Kidney (tissue), 22 donors: ENCODE measurements at regions of chr5 and their contacts with region 1.

Region 1: DNA sequence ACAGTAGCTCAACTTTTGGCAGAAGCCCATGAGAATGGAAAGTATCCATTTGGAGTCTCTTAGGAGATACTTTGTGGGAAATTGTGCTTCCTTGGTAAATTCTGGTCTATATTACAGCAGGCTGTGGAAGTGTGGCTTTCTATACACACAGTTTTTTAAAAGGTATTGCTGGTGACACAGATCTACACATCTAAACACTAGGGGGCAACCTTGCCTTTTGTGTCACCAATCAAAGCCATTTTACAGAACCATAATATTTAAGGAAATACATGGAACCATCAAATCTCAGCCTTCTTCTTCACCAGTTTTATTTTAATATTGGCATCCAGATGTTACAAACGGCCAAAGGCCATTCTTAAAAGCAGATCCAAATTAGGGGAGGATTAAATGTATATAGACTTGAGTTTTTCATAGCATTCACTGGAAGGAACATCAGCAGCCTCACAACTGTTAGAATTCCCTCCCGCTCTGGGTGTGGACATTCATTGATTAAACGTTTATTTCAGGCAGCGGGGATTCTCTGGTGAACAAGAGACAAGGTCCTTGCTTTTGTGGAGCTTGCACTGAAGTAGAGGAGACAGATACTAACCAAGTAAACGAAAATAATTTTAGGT is 132.4 kb upstream of the EPB41L4A start:
- DNase-seq: peak in 3 of 5 donors; percentile 46 to 85 (median 75)
- H3K4me3 ChIP-seq: no peak overlapping the region
- H3K27ac ChIP-seq: no peak overlapping the region
- H3K4me1 ChIP-seq: peaks cover 0 to 2% (median 0%) of the 10 kb centered on the region in 3 donors
- H3K27me3 ChIP-seq: no peaks in the 10 kb centered on the region
- CTCF ChIP-seq: peak; percentile 68

Region 2: GRCh38 chr5:112407667-112408403 is 143.7 kb before region 1 on chr5:
- intact Hi-C with region 1: no loop called
- DNase-seq: no peak
- H3K4me3 ChIP-seq: no peak overlapping the region
- H3K27ac ChIP-seq: no peak overlapping the region
- H3K4me1 ChIP-seq: peaks cover 0 to 14% (median 13%) of the 10 kb centered on the region in 3 donors
- H3K27me3 ChIP-seq: no peaks in the 10 kb centered on the region
- CTCF ChIP-seq: no peak

Region 3: DNA sequence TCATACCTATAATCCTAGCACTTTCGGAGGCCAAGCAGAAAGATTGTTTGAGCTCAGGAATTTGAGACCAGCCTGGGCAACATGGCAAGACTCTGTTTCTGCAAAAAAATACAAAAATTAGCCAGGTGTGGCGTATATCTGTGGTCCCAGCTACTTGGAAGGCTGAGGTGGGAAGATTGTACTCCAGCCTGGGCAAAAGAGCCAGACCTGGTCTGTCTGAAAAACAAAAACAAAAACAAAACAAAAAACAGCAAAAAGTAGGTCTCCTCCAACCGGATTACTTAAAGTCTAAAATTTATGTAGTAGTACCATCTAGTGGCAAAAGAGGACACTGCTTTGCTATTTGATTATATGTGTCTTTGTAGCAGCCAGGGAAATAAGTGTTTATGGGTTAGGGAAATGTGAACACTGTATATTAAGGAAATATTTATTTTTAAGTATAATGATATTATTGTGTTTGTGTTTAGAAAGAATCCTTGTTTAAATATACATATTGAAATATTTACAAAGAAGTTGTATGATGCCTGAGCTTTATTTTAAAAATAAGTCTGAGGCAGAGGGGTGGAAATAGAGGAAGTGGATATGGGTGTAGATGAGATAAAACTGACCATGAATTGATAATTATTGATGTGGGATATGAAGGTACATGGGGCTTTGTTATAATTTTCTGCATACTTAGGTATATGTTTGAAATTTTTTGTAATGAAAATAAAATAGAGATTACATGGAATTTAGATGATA is 206.1 kb after region 1 on chr5:
- intact Hi-C with region 1: loop called (anchors 5 kb)
- DNase-seq: peak in 2 of 5 donors; percentile 83 to 84
- H3K4me3 ChIP-seq: peak overlapping the region in 1 of 3 donors; percentile 46
- H3K27ac ChIP-seq: no peak overlapping the region
- H3K4me1 ChIP-seq: no peaks in the 10 kb centered on the region
- H3K27me3 ChIP-seq: no peaks in the 10 kb centered on the region
- CTCF ChIP-seq: peak; percentile 71